Spleen (tissue), 13 donors: ENCODE measurements at regions of chr7 and their contacts with region 1.

Region 1: DNA sequence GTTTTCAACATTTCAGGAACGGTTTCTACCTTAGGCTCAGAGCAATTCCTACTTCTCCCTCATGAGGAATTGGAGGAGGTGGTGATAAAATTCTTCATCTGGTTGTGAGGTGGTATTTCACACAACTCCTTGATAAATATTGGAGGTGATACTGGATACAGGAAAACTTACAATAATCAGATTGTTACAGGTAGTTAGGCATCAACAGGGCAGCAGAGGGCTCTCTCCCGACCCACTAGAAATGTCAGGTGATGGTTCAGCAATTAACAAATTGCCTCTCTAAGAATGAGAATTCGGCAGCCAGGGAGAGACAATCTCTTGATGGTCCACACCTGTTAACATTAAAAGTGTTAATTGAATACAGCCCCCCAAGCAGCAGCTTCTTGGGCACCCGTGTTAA is 22.6 kb downstream of the ZNF786 start:
- DNase-seq: no peak
- H3K4me3 ChIP-seq: no peak overlapping the region
- H3K27ac ChIP-seq: no peak overlapping the region
- H3K4me1 ChIP-seq: peaks cover 0 to 29% (median 4%) of the 10 kb centered on the region in 6 donors
- H3K27me3 ChIP-seq: no peaks in the 10 kb centered on the region
- CTCF ChIP-seq: no peak
- POLR2A ChIP-seq: no peak

Region 2: DNA sequence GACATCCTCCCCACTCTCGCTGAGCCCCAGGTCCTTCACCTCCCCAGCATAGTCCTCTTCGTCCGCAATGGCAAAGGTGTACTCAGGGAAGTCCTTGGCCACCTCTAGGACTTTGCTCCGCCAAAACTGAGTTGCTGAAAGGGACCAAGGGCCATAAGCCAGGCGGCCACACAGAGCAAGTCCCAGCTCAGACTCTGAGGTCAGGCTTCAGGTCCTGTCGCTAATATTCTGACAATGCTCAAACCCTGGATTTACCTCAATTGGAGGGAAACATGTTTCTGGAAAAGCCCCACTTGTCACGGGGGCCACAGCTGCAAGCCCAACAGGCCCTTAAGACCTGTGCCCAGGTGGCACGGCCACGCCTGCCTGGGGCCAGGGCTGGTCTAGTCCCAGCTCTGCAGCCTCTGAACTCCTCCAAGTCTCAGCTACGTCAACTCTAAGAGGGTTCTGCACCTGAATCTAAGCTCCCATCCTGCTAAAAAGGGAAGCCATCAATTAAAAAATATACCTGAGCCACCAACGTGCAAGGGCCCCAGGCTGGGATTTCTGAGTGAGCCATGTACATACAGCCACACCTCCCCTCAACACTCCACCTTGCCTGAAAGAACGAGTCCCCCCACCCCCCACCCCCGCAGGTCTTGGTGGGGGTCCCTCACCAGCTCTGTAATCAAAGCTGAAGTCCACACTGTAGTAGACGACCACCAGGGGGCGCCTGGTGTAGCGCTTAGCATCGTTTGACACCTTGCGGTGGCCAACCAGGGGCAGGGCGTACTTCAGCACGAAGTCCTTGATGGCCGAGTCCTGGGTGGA is 62.4 kb before region 1 on chr7:
- intact Hi-C with region 1: loop called (anchors 2 kb)
- DNase-seq: peak; percentile 95
- H3K4me3 ChIP-seq: no peak overlapping the region
- H3K27ac ChIP-seq: peak overlapping the region in 1 of 8 donors; percentile 9
- H3K4me1 ChIP-seq: peaks cover 0 to 13% (median 4%) of the 10 kb centered on the region in 6 donors
- H3K27me3 ChIP-seq: no peaks in the 10 kb centered on the region
- CTCF ChIP-seq: peak; percentile 45 to 91 (median 86)
- POLR2A ChIP-seq: no peak

Region 3: DNA sequence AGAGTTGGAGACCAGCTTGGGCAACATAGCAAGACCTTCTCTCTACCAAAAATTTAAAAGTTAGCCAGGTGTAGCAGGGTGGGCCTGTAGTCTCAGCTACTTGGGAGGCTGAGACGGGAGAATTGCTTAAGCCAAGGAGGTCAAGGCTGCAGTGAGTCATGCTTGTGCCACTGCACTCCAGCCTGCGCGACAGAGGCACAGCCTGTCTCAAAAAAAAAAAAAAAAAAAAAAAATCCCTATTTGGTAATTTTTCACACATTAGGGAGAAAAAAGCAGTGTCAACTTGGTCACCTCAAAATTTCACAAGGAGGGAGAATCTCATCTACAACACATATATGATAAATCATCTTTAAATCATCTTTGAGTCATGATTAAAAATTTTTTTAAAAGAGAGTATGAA is 73.0 kb after region 1 on chr7:
- intact Hi-C with region 1: no loop called
- DNase-seq: no peak
- H3K4me3 ChIP-seq: no peak overlapping the region
- H3K27ac ChIP-seq: no peak overlapping the region
- H3K4me1 ChIP-seq: peaks cover 0 to 13% (median 10%) of the 10 kb centered on the region in 6 donors
- H3K27me3 ChIP-seq: no peaks in the 10 kb centered on the region
- CTCF ChIP-seq: no peak
- POLR2A ChIP-seq: no peak

Region 4: GRCh38 chr7:149474309-149475114 is 406.6 kb after region 1 on chr7:
- intact Hi-C with region 1: no loop called
- DNase-seq: peak; percentile 71
- H3K4me3 ChIP-seq: no peak overlapping the region
- H3K27ac ChIP-seq: no peak overlapping the region
- H3K4me1 ChIP-seq: no peaks in the 10 kb centered on the region
- H3K27me3 ChIP-seq: no peaks in the 10 kb centered on the region
- CTCF ChIP-seq: no peak
- POLR2A ChIP-seq: no peak